ENCODE measurements at regions of chrX and their contacts with region 1.

Region 1: DNA sequence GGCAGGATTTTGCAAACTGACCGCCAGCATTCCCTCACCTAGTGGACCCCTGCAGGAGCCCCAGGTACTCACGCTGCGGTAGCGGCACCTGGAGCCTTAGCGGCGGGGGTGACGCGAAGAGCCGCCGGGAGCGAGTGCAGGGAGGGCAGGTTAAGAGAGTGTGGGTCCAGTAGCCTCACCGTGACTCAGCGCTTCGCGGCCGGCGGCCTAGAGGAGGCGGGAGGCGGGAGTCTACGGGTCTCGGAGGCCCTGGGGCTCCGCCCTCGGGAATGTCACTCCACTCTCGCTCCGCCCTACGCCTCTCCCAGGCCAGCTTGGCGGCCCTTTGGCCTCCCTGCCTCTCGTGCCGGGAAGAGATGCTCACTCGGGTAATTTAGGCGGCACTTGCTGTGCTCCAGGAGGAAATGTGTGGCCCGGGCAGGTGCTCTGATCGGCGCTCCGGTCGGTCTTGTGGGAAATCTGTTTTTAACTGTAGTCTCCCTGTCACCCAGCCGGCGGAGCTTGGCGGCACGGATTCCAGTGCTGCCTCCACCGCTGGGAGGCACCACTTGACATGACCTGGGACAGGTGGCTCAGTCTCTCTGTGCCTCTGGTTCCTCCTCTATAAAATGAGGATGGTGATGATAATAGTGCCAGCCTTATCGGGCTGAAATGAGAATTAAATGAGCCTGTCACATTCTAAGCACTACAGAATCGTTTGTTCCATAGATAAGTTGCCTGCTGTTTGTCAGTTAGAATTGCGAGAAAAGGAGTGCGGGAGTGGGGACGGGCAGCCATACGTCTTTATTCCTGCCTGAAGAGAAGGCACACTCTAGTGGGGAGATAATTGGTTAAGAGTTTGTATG is at the start of gene PIR:
- DNase-seq: peak in 8 of 9 experiments; percentile 13 to 61 (median 34)
- ATAC-seq: peak; percentile 62
- H3K4me3 ChIP-seq: peak within 1 kb of the TSS; percentile 27 to 45
- H3K4me3 Mint-ChIP-seq: peak within 1 kb of the TSS; percentile 83
- H3K27ac ChIP-seq: no peak within 1 kb of the TSS
- H3K27ac Mint-ChIP-seq: no peak within 1 kb of the TSS
- H3K4me1 ChIP-seq: no peaks in the 10 kb centered on the region
- H3K4me1 Mint-ChIP-seq: peaks cover 7% of the 10 kb centered on the region
- H3K27me3 ChIP-seq: no peaks in the 10 kb centered on the region
- H3K27me3 Mint-ChIP-seq: peaks cover 4% of the 10 kb centered on the region
- CTCF ChIP-seq: no peak
- total RNA-seq, gene PIR: not detected

Region 2: GRCh38 chrX:15564981-15565579 is 71.7 kb after region 1 on chrX:
- CTCF ChIA-PET with region 1: no interaction called
- POLR2A ChIA-PET with region 1: no interaction called
- intact Hi-C with region 1: loop called in 1 of 2 experiments (anchors 2 kb)
- DNase-seq: peak in 3 of 9 experiments; percentile 4 to 31 (median 31)
- ATAC-seq: no peak
- H3K4me3 ChIP-seq: no peak overlapping the region
- H3K4me3 Mint-ChIP-seq: no peak overlapping the region
- H3K27ac ChIP-seq: no peak overlapping the region
- H3K27ac Mint-ChIP-seq: no peak overlapping the region
- H3K4me1 ChIP-seq: no peaks in the 10 kb centered on the region
- H3K4me1 Mint-ChIP-seq: no peaks in the 10 kb centered on the region
- H3K27me3 ChIP-seq: no peaks in the 10 kb centered on the region
- H3K27me3 Mint-ChIP-seq: peaks cover 10% of the 10 kb centered on the region
- CTCF ChIP-seq: no peak

Region 3: GRCh38 chrX:15645258-15645657 is 151.9 kb after region 1 on chrX:
- CTCF ChIA-PET with region 1: interaction called, 3 read pairs
- POLR2A ChIA-PET with region 1: no interaction called
- intact Hi-C with region 1: loop called in 1 of 2 experiments (anchors 10 kb)
- DNase-seq: no peak
- ATAC-seq: no peak
- H3K4me3 ChIP-seq: no peak overlapping the region
- H3K4me3 Mint-ChIP-seq: no peak overlapping the region
- H3K27ac ChIP-seq: no peak overlapping the region
- H3K27ac Mint-ChIP-seq: no peak overlapping the region
- H3K4me1 ChIP-seq: no peaks in the 10 kb centered on the region
- H3K4me1 Mint-ChIP-seq: peaks cover 18% of the 10 kb centered on the region
- H3K27me3 ChIP-seq: no peaks in the 10 kb centered on the region
- H3K27me3 Mint-ChIP-seq: peaks cover 3% of the 10 kb centered on the region
- CTCF ChIP-seq: no peak

Measured in CD8-positive, alpha-beta T cell (primary cell).